K562 (cell line): ENCODE measurements at regions of chr1 and their contacts with region 1.

Region 1: DNA sequence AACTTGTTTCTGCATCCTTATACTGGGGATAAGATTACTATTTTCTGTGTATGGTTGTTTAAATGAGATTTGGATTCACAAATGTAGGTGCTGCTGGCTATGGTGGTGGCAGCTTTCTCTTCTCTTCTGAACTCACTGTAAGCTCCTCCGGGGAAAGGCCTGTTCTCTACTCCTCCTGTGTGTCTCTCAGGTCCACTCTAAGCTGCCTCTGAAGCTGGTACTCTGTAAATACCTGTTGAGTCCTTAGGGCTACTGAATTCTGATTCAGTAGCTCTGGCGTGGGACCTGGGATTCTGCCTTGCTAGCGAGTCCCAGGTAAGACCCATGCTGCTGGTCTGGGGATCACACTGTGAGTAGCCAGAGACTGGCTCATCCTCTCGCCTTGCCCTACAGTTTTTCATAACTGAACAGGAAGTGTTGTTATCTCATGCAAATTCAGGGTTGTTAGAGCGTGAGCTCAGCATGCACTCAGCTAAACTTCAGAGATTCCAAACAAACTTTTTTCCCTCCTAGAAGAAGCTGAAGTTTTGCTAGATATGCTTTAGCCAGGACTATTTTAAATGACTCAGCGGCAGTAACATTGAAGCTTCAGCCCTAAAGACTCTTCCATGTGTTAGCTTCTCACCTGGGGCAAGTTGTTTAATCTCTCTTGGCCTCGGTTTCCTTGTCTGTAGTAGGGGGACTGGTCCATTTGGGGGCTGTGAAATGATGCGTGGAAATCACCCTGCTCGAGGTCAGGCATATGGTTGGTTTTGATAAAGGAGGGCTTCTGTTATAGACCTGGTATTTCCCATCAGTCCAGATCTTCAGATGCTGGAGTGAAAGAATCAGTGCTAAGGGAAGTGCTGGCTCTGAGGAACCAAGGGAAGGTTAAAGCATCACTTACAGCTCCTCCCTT is 271.5 kb upstream of the TMEM51 start:
- DNase-seq: peak in 2 of 4 experiments; percentile 49 to 53
- ATAC-seq: peak; percentile 88
- H3K4me3 ChIP-seq: no peak overlapping the region
- H3K27ac ChIP-seq: peak overlapping the region; percentile 66
- H3K4me1 ChIP-seq: peaks cover 11 to 34% of the 10 kb centered on the region in 2 experiments
- H3K27me3 ChIP-seq: 0 out of 5 replicates have a peak, but pooled peaks cover 0 to 1% of the 10 kb centered on the region in 2 experiments
- CTCF ChIP-seq: no peak
- EP300 ChIP-seq: peak; percentile 69; the same call in 1 of the 2 replicates
- POLR2A ChIP-seq: no peak
- RAD21 ChIP-seq: no peak; a peak in 1 of 4 replicates

Region 2: DNA sequence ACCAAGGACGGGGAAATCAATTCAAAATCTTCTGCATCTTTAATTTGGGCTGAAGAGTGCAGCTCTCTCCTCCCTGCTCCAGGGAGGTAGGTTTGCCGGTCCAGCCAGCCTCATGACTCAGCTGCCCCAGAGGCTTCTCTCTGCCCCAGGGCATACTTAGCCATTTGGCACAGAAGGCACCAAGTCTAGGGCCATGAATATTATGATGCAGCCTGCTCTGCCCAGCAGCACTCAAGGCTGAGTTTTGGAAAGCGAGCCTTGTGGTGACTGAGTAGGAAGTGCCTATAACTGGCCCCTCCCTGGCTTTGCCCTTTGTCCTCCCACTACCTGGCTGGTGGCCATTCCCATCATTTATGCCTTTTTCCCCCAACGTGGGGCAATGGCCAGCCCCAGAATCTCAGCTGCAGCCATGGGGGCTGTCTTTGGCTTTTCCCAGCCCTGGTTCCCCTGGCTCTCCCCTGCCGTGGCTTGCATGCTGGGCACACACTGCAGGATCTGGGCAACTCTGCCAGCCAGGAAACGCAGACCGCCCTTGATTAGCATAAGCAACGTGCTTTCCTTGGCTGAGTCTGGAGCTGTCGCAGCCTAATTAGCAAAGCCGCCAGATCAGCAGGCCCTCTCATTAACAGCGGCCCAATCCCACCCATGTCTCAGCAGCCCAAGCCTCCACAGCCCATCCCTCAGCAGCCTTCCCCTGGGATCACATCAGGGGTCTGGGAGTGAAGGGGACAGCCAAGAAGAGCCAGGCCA is 13.0 kb after region 1 on chr1:
- CTCF ChIA-PET with region 1: no interaction called
- POLR2A ChIA-PET with region 1: interaction called, 17 read pairs
- in situ Hi-C with region 1: no loop called
- intact Hi-C with region 1: no loop called
- DNase-seq: no peak
- ATAC-seq: no peak
- H3K4me3 ChIP-seq: no peak overlapping the region
- H3K27ac ChIP-seq: no peak overlapping the region
- H3K4me1 ChIP-seq: 0 out of 5 replicates have a peak, but pooled peaks cover 0 to 3% of the 10 kb centered on the region in 2 experiments
- H3K27me3 ChIP-seq: peaks cover 15 to 57% of the 10 kb centered on the region in 2 experiments
- CTCF ChIP-seq: no peak
- EP300 ChIP-seq: no peak
- POLR2A ChIP-seq: no peak
- RAD21 ChIP-seq: no peak